Activated CD4-positive, alpha-beta memory T cell treated with anti-CD3 and anti-CD28 coated beads for 36 hours (primary cell): ENCODE measurements at regions of chr17 and their contacts with region 1.

Region 1: GRCh38 chr17:55072898-55073297 is 104.3 kb downstream of the STXBP4 start:
- DNase-seq: no peak
- H3K4me3 Mint-ChIP-seq: no peak overlapping the region
- H3K27ac Mint-ChIP-seq: peak overlapping the region; percentile 56
- H3K4me1 Mint-ChIP-seq: peaks cover 13% of the 10 kb centered on the region
- H3K27me3 Mint-ChIP-seq: no peaks in the 10 kb centered on the region

Region 2: DNA sequence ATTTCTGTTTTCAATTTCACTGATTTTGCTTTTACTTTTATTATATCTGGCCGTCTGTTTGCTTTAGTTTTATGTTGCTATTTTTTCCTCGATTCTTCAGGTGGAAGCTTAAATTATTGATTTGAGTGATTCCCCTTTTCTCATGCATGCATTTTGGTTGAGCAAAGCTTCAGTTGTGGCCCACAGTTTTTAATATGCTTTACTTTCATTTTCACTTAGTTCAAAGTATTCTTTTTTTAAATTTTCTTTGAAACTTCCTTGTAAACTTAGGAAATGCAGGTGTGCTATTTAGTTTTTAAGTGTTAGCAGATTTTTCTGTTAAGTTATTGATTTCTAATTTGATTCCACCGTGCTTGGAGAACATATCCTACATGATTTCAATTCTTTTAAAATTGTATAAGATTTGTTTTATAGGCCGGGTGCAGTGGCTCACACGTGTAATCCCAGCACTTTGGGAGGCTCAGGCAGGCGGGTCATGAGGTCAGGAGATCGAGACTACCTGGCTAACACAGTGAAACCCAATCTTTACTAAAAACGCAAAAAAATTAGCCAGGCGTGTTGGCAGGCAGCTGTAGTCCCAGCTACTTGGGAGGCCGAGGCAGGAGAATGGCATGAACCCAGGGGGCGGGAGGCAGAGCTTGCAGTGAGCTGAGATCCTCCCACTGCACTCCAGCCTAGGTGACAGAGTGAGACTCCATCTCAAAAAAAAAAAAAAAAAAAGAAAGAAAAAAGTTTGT is 718.9 kb before region 1 on chr17:
- CTCF ChIA-PET with region 1: no interaction called
- POLR2A ChIA-PET with region 1: no interaction called
- intact Hi-C with region 1: no loop called
- DNase-seq: no peak
- H3K4me3 Mint-ChIP-seq: no peak overlapping the region
- H3K27ac Mint-ChIP-seq: no peak overlapping the region
- H3K4me1 Mint-ChIP-seq: no peaks in the 10 kb centered on the region
- H3K27me3 Mint-ChIP-seq: no peaks in the 10 kb centered on the region

Region 3: GRCh38 chr17:55005520-55005919 is 67.4 kb before region 1 on chr17:
- CTCF ChIA-PET with region 1: no interaction called
- POLR2A ChIA-PET with region 1: no interaction called
- intact Hi-C with region 1: no loop called
- DNase-seq: no peak
- H3K4me3 Mint-ChIP-seq: no peak overlapping the region
- H3K27ac Mint-ChIP-seq: no peak overlapping the region
- H3K4me1 Mint-ChIP-seq: no peaks in the 10 kb centered on the region
- H3K27me3 Mint-ChIP-seq: no peaks in the 10 kb centered on the region

Region 4: GRCh38 chr17:55090079-55090492 is 17.2 kb after region 1 on chr17:
- CTCF ChIA-PET with region 1: no interaction called
- POLR2A ChIA-PET with region 1: no interaction called
- intact Hi-C with region 1: loop called (anchors 1 kb)
- DNase-seq: peak; percentile 76
- H3K4me3 Mint-ChIP-seq: no peak overlapping the region
- H3K27ac Mint-ChIP-seq: peak overlapping the region; percentile 80
- H3K4me1 Mint-ChIP-seq: peaks cover 26% of the 10 kb centered on the region
- H3K27me3 Mint-ChIP-seq: no peaks in the 10 kb centered on the region

Region 5: GRCh38 chr17:55110521-55110920 is 37.6 kb after region 1 on chr17:
- CTCF ChIA-PET with region 1: no interaction called
- POLR2A ChIA-PET with region 1: no interaction called
- intact Hi-C with region 1: no loop called
- DNase-seq: no peak
- H3K4me3 Mint-ChIP-seq: no peak overlapping the region
- H3K27ac Mint-ChIP-seq: no peak overlapping the region
- H3K4me1 Mint-ChIP-seq: no peaks in the 10 kb centered on the region
- H3K27me3 Mint-ChIP-seq: no peaks in the 10 kb centered on the region